ENCODE measurements at regions of chr16 and their contacts with region 1.

Region 1: DNA sequence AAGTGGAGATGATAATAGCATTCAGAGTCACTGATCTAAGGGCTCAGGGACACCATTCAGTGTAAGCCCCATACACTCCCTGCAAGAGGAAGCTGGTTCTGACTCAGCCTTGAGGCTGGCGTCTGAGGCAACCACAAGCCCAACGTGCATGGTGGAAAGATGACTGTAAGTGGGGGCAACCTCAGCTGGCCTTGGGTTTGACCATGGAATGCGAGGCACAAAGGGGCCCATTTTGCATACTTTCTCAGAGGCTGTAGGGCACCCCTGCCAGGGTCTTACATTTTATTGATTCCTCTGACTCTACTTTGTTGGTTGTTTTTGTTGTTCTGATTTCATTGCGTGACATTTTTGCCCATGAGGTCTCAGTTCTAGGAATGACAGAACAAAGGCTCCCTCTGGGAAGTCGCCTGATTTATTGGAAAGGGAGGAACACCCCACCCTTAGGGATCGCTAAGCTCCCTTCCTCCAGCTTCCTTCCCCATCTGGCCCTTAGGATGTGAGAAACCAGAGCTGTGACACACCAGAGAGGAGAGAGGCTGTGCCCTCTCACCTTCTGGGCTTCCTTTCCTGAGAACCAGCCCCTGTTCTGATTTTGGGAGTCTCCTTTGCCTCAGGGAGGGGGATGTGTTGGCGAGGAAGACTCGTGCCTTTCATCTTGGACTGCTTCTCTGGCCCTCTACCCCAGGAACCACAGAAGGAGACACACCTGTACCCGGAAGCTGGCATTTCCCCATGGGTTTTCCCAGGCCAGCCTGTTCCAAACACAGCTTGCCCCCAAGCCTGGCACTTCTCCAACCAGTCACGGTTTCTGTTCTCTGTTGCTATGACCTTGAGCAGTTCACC is 5.6 kb upstream of the CIITA start:
- DNase-seq: peak; percentile 90
- H3K4me3 Mint-ChIP-seq: peak overlapping the region; percentile 36
- H3K27ac Mint-ChIP-seq: peak overlapping the region; percentile 85
- H3K4me1 Mint-ChIP-seq: peaks cover 59% of the 10 kb centered on the region
- H3K27me3 Mint-ChIP-seq: peaks cover 38% of the 10 kb centered on the region

Region 2: GRCh38 chr16:9980981-9981380 is 890.4 kb before region 1 on chr16:
- CTCF ChIA-PET with region 1: no interaction called
- POLR2A ChIA-PET with region 1: no interaction called
- intact Hi-C with region 1: no loop called
- DNase-seq: no peak
- H3K4me3 Mint-ChIP-seq: no peak overlapping the region
- H3K27ac Mint-ChIP-seq: no peak overlapping the region
- H3K4me1 Mint-ChIP-seq: no peaks in the 10 kb centered on the region
- H3K27me3 Mint-ChIP-seq: no peaks in the 10 kb centered on the region

Region 3: DNA sequence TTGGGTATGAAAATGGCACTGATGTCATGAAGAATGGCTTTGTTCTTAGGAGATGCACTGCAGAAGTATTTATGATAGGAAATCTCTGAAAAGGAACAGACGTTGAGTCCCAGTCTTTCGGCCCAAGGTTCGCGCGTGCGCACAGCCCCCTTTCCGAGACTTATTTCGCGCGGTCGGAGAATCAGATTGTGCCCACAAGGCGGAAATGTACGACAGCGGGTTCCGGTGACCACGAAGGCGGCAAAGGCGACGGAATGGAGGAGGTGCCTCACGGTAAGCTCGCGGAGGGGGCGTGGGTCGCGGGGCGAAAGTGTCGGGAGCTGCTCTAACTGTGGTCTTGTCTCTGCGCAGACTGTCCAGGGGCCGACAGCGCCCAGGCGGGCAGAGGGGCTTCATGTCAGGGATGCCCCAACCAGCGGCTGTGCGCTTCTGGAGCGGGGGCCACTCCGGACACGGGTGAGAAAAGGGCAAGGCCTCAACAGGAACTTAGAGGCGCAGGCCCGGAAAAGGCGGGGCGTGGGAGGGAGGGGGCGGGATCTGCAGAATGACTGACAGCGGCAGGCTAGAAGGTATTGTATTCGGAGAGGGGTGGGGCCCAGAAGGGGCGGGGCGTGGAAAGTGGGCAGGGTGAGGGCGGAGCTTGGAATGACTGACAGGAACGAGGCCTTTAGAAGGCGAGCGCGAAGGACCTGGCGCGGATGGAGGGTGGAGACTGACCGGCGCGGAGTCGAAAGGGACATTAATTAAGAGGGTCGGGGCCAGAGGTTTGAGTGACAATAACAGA is 127.6 kb before region 1 on chr16 and contains the start of gene NUBP1:
- CTCF ChIA-PET with region 1: no interaction called
- POLR2A ChIA-PET with region 1: no interaction called
- intact Hi-C with region 1: loop called (anchors 2 kb)
- DNase-seq: peak; percentile 100
- H3K4me3 Mint-ChIP-seq: peak within 1 kb of the TSS; percentile 94
- H3K27ac Mint-ChIP-seq: peak within 1 kb of the TSS; percentile 99
- H3K4me1 Mint-ChIP-seq: peaks cover 37% of the 10 kb centered on the region
- H3K27me3 Mint-ChIP-seq: no peaks in the 10 kb centered on the region
- total RNA-seq, gene NUBP1: 26.5 to 31.5 TPM

Region 4: DNA sequence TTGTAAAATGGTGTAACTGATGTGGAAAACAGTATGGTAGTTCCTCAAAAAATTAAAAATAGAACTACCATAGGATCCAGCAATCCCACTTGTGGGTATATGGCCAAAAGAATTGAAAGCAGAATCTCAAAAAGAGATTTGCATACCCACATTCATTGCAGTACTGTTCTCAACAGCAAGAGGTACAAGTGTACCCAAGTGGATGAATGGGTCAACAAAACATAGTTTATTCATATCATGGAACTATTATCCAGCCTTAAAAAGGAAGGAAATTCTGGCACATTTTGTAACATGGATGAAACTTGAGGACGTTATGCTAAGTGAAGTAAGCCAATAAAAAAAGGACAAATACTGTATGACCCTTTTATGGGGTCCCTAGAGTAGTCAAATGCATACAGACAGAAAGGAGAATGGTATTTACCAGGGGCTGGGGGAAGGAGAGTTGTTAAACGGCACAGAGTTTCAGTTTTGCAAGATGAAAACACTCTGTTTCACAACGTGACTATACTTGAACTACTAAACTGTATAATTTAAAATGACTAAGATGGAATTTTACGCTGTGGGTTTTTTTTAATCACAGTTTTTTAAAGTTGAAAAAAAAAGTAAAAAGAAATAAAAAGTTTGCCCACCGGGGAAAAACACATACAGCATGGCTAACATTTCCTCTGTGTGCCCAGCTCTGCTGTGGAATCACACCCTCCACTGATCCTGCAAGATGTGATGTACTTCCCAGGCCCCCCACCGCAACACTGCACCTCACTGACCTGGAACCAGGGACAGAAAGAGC is 58.9 kb before region 1 on chr16:
- CTCF ChIA-PET with region 1: no interaction called
- POLR2A ChIA-PET with region 1: interaction called, 3 read pairs
- intact Hi-C with region 1: loop called (anchors 1 kb)
- DNase-seq: peak; percentile 16
- H3K4me3 Mint-ChIP-seq: no peak overlapping the region
- H3K27ac Mint-ChIP-seq: peak overlapping the region; percentile 43
- H3K4me1 Mint-ChIP-seq: peaks cover 16% of the 10 kb centered on the region
- H3K27me3 Mint-ChIP-seq: peaks cover 7% of the 10 kb centered on the region

Region 5: GRCh38 chr16:10835281-10835931 is 36.0 kb before region 1 on chr16:
- CTCF ChIA-PET with region 1: no interaction called
- POLR2A ChIA-PET with region 1: no interaction called
- intact Hi-C with region 1: loop called (anchors 2 kb)
- DNase-seq: peak; percentile 65
- H3K4me3 Mint-ChIP-seq: no peak overlapping the region
- H3K27ac Mint-ChIP-seq: no peak overlapping the region
- H3K4me1 Mint-ChIP-seq: peaks cover 4% of the 10 kb centered on the region
- H3K27me3 Mint-ChIP-seq: peaks cover 15% of the 10 kb centered on the region

Region 6: GRCh38 chr16:10937068-10937859 is 65.9 kb after region 1 on chr16:
- CTCF ChIA-PET with region 1: no interaction called
- POLR2A ChIA-PET with region 1: no interaction called
- intact Hi-C with region 1: loop called (anchors 2 kb)
- DNase-seq: no peak
- H3K4me3 Mint-ChIP-seq: peak overlapping the region; percentile 41
- H3K27ac Mint-ChIP-seq: no peak overlapping the region
- H3K4me1 Mint-ChIP-seq: peaks cover 69% of the 10 kb centered on the region
- H3K27me3 Mint-ChIP-seq: no peaks in the 10 kb centered on the region

Region 7: GRCh38 chr16:11004957-11005610 is 133.7 kb after region 1 on chr16:
- CTCF ChIA-PET with region 1: no interaction called
- POLR2A ChIA-PET with region 1: no interaction called
- intact Hi-C with region 1: no loop called
- DNase-seq: no peak
- H3K4me3 Mint-ChIP-seq: no peak overlapping the region
- H3K27ac Mint-ChIP-seq: no peak overlapping the region
- H3K4me1 Mint-ChIP-seq: peaks cover 3% of the 10 kb centered on the region
- H3K27me3 Mint-ChIP-seq: no peaks in the 10 kb centered on the region